ENCODE measurements at regions of chr5 and their contacts with region 1.

Region 1: DNA sequence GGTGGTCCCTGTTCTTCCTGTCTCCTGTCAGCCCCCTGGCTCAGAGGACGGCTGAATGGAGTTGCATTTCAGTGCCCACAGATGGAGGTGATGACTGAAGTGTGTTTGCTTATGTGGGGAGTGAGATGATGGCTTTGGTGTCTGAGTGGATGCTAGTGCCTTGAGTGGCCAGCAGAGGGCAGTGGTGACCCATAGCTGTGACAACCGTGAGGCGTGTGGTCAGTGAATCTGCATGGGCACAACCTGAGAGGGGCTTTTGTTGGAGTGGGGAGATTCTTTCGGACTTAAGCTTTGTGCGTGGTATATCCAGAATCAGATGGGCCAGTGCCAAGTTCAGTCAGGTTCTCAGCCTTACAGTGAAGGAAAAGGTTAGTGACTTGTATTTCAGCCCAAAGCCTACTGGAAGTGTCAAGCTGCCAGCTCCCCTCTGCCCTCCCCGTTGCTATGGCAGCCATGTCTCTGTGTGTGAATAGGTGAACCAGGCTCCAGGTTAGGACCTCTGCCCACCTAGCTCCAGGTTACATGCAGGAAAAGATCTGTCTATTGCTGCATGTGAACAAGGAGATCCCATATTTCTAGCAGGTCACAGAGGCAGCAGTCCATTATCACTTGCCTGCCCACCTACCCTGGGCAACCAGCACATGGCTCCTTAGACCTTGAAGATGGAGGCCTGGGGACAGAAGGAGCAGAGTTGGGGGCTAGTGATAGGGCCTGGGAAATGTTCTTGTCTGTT is 14.7 kb upstream of the CXXC5 start:
- DNase-seq: peak; percentile 74 to 90
- ATAC-seq: peak; percentile 73
- H3K4me3 ChIP-seq: no peak overlapping the region
- H3K27ac ChIP-seq: no peak overlapping the region
- H3K4me1 ChIP-seq: peaks cover 0 to 2% of the 10 kb centered on the region in 2 donors
- H3K27me3 ChIP-seq: no peaks in the 10 kb centered on the region

Region 2: GRCh38 chr5:138610918-138611677 is 1022.4 kb before region 1 on chr5:
- intact Hi-C with region 1: no loop called
- DNase-seq: no peak
- ATAC-seq: peak; percentile 41
- H3K4me3 ChIP-seq: no peak overlapping the region
- H3K27ac ChIP-seq: no peak overlapping the region
- H3K4me1 ChIP-seq: no peaks in the 10 kb centered on the region
- H3K27me3 ChIP-seq: no peaks in the 10 kb centered on the region

Region 3: GRCh38 chr5:139560752-139561654 is 72.5 kb before region 1 on chr5 and contains the start of gene UBE2D2:
- intact Hi-C with region 1: no loop called
- DNase-seq: peak; percentile 99 to 100
- ATAC-seq: peak; percentile 99
- H3K4me3 ChIP-seq: peak within 1 kb of the TSS; percentile 87 to 98
- H3K27ac ChIP-seq: peak within 1 kb of the TSS; percentile 87 to 88
- H3K4me1 ChIP-seq: no peaks in the 10 kb centered on the region
- H3K27me3 ChIP-seq: no peaks in the 10 kb centered on the region
- total RNA-seq, gene UBE2D2: 96.8 to 116 TPM

Region 4: GRCh38 chr5:139651853-139652787 is 18.7 kb after region 1 on chr5:
- intact Hi-C with region 1: loop called (anchors 1 kb)
- DNase-seq: peak; percentile 84 to 94
- ATAC-seq: peak; percentile 30
- H3K4me3 ChIP-seq: no peak overlapping the region
- H3K27ac ChIP-seq: peak overlapping the region; percentile 53 to 83
- H3K4me1 ChIP-seq: peaks cover 0 to 1% of the 10 kb centered on the region in 2 donors
- H3K27me3 ChIP-seq: no peaks in the 10 kb centered on the region

Region 5: GRCh38 chr5:139690064-139690802 is 56.8 kb after region 1 on chr5:
- intact Hi-C with region 1: loop called in 1 of 2 experiments (anchors 2 kb)
- DNase-seq: peak; percentile 71 to 90
- ATAC-seq: peak; percentile 15
- H3K4me3 ChIP-seq: no peak overlapping the region
- H3K27ac ChIP-seq: no peak overlapping the region
- H3K4me1 ChIP-seq: no peaks in the 10 kb centered on the region
- H3K27me3 ChIP-seq: no peaks in the 10 kb centered on the region

Region 6: GRCh38 chr5:139745800-139746690 is 112.6 kb after region 1 on chr5:
- intact Hi-C with region 1: loop called (anchors 5 kb)
- DNase-seq: peak; percentile 79 to 87
- ATAC-seq: peak; percentile 77
- H3K4me3 ChIP-seq: peak overlapping the region; percentile 18 to 22
- H3K27ac ChIP-seq: peak overlapping the region in 1 of 2 donors; percentile 4
- H3K4me1 ChIP-seq: no peaks in the 10 kb centered on the region
- H3K27me3 ChIP-seq: no peaks in the 10 kb centered on the region

Region 7: DNA sequence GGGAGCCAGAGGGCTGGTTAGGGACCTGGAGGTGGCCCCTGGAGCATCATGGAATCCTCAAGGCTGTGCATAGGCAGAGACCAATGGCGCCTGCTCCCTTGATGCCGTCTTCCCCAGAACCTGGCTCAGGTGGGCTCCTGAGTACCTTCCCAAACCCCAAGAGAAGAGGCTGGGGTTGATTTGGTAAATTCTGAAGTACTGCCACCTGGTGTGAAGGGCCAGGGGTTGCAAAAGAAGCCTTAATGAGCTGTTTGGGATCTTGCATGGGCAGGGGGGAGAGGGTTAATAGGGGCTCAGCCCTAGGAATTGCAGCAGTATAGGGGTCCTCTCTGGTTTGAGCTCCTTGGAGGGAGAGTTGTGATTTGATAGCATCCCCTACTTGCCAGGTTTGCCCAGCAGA is 593.6 kb after region 1 on chr5:
- intact Hi-C with region 1: no loop called
- DNase-seq: no peak
- ATAC-seq: no peak
- H3K4me3 ChIP-seq: no peak overlapping the region
- H3K27ac ChIP-seq: no peak overlapping the region
- H3K4me1 ChIP-seq: no peaks in the 10 kb centered on the region
- H3K27me3 ChIP-seq: no peaks in the 10 kb centered on the region